Dorsolateral prefrontal cortex (tissue), 120 donors: ENCODE measurements at regions of chr20 and their contacts with region 1.

Region 1: DNA sequence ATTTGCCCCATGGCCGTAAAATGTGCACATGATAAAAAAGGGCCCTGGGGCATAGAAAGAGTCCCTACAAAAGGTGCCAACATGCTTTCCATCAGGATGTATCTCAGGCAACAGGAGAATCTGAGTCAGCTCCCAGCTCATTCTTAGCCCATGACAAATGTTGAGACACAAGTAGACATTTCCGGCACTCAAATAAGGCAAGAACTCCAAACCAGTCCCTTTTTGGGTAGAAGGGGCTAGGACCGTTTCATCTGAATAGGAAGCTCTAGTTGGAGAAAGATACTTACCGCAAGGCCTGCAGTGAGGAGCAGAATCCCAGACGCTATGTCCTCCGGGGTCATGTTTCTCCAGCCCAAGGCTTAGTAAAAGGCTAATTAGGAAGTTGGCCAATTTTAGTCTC is 261.0 kb upstream of the RIN2 start:
- DNase-seq: no peak
- H3K4me3 ChIP-seq: no peak overlapping the region
- H3K27ac ChIP-seq: no peak overlapping the region
- H3K27me3 ChIP-seq: peaks cover 0 to 5% (median 0%) of the 10 kb centered on the region in 45 donors
- CTCF ChIP-seq: no peak

Region 2: GRCh38 chr20:19433371-19434350 is 63.4 kb before region 1 on chr20:
- intact Hi-C with region 1: loop called in 1 of 2 experiments (anchors 10 kb)
- DNase-seq: no peak
- H3K4me3 ChIP-seq: no peak overlapping the region
- H3K27ac ChIP-seq: no peak overlapping the region
- H3K27me3 ChIP-seq: peaks cover 0 to 4% (median 0%) of the 10 kb centered on the region in 45 donors
- CTCF ChIP-seq: no peak